Activated CD4-positive, alpha-beta memory T cell treated with anti-CD3 and anti-CD28 coated beads for 36 hours (primary cell): ENCODE measurements at regions of chr19 and their contacts with region 1.

Region 1: GRCh38 chr19:46265217-46265828 is 31.5 kb upstream of the HIF3A start:
- DNase-seq: peak; percentile 78
- H3K4me3 Mint-ChIP-seq: no peak overlapping the region
- H3K27ac Mint-ChIP-seq: no peak overlapping the region
- H3K4me1 Mint-ChIP-seq: peaks cover 16% of the 10 kb centered on the region
- H3K27me3 Mint-ChIP-seq: peaks cover 52% of the 10 kb centered on the region

Region 2: GRCh38 chr19:46021531-46022041 is 243.7 kb before region 1 on chr19:
- CTCF ChIA-PET with region 1: interaction called, 116 read pairs
- POLR2A ChIA-PET with region 1: no interaction called
- intact Hi-C with region 1: no loop called
- DNase-seq: no peak
- H3K4me3 Mint-ChIP-seq: no peak overlapping the region
- H3K27ac Mint-ChIP-seq: no peak overlapping the region
- H3K4me1 Mint-ChIP-seq: peaks cover 14% of the 10 kb centered on the region
- H3K27me3 Mint-ChIP-seq: peaks cover 11% of the 10 kb centered on the region

Region 3: DNA sequence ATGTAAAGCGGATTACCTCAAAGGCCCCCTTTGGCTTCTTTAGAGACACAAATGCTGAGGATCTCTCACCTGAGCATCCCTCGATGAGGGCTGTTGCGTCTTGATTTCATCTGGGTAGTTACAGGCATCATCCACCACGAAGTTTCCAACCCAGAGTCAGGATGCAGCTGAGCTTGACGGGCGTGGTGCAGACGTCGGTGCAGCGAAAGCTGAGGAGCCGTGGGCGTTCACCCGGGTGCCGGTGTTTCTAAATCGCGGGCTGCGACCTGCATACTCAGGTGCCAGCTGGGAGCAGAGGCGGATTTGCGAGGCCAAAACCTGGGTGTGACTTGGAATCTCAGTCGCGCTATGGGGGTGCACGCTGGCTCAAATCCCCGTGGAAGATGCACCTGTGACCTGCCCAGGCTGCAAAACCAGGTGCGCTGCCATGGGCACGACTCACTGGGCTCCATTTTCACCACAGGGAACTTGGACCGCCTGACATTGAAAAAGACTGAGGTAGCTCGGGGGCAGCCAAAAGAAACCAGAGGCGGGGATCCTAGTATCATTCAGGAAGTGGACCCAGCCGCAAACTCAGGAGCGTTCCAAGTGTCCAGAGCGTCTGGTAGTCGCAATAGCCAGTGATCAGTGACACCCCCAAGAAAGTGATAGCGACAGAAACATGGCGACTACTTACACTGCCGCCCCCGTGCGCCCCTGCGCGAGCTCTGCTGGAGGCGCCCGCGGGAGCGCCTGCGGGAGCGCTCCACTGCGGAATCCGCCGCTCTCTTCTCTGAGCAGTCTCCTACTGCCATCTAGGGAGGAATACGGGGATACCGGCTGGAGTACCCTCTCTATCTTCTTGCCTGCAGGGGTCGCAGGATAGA is 188.1 kb before region 1 on chr19:
- CTCF ChIA-PET with region 1: interaction called, 92 read pairs
- POLR2A ChIA-PET with region 1: no interaction called
- intact Hi-C with region 1: loop called (anchors 1 kb)
- DNase-seq: peak; percentile 55
- H3K4me3 Mint-ChIP-seq: no peak overlapping the region
- H3K27ac Mint-ChIP-seq: no peak overlapping the region
- H3K4me1 Mint-ChIP-seq: peaks cover 8% of the 10 kb centered on the region
- H3K27me3 Mint-ChIP-seq: peaks cover 77% of the 10 kb centered on the region

Region 4: DNA sequence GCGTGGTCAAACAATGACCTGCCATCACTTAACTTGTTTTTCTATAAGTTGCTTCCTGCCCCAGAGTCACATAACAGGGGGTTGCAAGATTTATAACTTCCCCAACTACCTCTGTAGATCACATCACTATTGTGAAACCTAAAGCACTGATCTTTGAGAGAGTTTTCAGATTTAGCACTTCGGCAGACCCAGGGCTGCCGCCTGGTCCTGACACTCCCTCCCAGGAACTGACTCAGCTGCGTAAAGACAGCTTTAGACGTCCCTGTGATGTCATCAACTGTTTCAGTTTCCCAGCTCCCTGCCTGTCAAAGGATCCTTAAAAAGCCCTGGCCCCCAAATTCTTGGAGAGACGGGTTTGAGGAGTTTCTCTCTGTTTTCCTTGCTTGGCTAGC is 83.9 kb before region 1 on chr19:
- CTCF ChIA-PET with region 1: interaction called, 3 read pairs
- POLR2A ChIA-PET with region 1: no interaction called
- intact Hi-C with region 1: loop called (anchors 5 kb)
- DNase-seq: peak; percentile 36
- H3K4me3 Mint-ChIP-seq: no peak overlapping the region
- H3K27ac Mint-ChIP-seq: no peak overlapping the region
- H3K4me1 Mint-ChIP-seq: peaks cover 20% of the 10 kb centered on the region
- H3K27me3 Mint-ChIP-seq: peaks cover 32% of the 10 kb centered on the region

Region 5: GRCh38 chr19:46283771-46284170 is 18.4 kb after region 1 on chr19:
- CTCF ChIA-PET with region 1: interaction called, 23 read pairs
- POLR2A ChIA-PET with region 1: no interaction called
- intact Hi-C with region 1: no loop called
- DNase-seq: no peak
- H3K4me3 Mint-ChIP-seq: no peak overlapping the region
- H3K27ac Mint-ChIP-seq: no peak overlapping the region
- H3K4me1 Mint-ChIP-seq: no peaks in the 10 kb centered on the region
- H3K27me3 Mint-ChIP-seq: peaks cover 10% of the 10 kb centered on the region